Mammary epithelial cell (primary cell): ENCODE measurements at regions of chr3 and their contacts with region 1.

Region 1: GRCh38 chr3:48708481-48708889 is 8.5 kb downstream of the IP6K2 start:
- DNase-seq: peak; percentile 52
- H3K4me3 ChIP-seq: no peak overlapping the region
- H3K27ac ChIP-seq: peak overlapping the region; percentile 92
- H3K4me1 ChIP-seq: peaks cover 39% of the 10 kb centered on the region
- H3K27me3 ChIP-seq: no peaks in the 10 kb centered on the region
- CTCF ChIP-seq: no peak

Region 2: DNA sequence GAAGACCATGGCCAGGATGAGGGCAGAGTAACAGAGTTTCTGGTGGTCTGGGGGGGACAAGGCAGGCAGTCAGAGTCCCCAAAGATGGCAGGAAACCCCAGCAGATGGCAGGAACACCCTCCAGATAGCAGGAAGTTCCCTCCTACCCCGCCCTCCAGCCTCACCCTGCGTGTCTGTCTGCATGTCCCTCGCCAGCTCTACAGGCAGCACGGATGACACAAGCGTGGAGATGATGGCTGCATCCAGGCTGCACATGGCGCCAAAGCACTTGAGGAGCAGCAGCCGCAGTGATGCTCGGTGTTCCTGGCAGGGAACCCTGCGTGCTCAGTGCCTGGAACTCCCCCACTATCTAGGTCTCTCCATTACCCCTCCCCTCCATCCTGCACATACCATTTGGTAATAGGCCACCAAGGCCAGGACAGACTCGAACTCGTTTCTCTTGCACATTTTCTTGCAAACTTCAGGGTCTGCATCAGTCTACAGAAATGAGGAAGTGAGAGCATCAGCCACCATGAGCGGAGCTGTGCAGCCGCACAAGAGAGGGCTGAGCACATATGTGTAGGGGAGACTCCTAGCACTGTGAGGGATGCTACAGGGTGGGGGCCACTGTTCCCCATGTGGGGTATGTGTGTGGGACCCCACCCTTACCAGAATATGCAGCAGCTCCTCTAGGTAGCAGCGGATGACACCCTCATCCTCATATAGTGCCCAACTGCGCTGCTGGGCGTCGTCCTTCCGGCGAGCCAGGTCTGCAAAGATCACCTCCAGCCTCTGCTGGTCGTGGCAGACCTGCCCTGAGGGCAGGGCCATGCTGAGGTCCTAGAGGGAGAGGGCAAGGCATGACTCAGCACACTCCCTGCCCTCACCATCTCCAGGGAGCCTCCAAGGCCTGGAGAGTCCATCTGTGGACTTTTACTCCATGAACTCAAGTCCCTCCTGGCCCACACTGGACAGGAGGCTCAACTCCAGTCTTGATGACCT is 28.8 kb before region 1 on chr3:
- CTCF ChIA-PET with region 1: no interaction called
- dilution Hi-C with region 1: no loop called
- in situ Hi-C with region 1: no loop called
- intact Hi-C with region 1: no loop called
- DNase-seq: no peak
- H3K4me3 ChIP-seq: no peak overlapping the region
- H3K27ac ChIP-seq: no peak overlapping the region
- H3K4me1 ChIP-seq: peaks cover 19% of the 10 kb centered on the region
- H3K27me3 ChIP-seq: no peaks in the 10 kb centered on the region
- CTCF ChIP-seq: no peak

Region 3: DNA sequence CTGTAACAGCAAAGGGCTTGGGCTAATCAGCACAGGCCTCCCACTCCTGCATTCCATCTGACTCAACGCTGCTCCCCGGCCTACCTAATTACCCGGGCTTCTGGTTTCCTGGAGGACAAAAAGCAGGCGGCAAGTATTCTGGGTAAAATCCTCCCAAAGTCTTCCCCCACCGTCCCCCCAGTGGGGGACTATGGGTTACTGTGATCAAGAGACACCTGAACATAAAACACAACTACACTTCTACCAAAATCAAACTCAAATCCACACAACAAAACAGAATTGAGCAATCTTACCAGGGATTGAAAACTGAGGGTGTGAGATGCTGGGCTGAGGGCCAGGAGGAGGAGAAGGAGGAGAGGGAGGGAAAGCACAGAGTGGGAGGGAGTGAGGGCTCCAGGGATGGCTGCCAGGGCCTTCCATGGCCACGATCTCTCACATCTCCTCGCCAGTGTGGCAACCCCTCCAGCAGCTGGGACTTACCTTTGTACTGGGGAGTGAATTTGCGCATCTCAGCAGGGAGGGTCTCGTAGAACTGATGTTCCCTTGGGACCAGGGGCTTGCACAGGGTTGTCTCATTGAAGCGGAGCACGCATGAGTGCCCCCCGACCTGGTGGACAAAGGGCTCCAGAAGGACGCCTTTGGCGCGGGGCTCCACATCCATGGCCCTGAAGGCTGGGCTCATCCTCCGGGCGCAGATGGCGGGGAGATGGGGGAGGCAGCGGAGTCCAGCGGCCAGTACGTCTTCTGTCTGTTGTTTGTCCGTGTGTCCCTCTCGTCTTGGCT is 13.7 kb before region 1 on chr3:
- CTCF ChIA-PET with region 1: interaction called, 4 read pairs
- dilution Hi-C with region 1: no loop called
- in situ Hi-C with region 1: no loop called
- intact Hi-C with region 1: loop called (anchors 2 kb)
- DNase-seq: peak; percentile 85
- H3K4me3 ChIP-seq: peak overlapping the region in 2 of 3 experiments; percentile 30 to 37
- H3K27ac ChIP-seq: peak overlapping the region; percentile 81
- H3K4me1 ChIP-seq: peaks cover 43% of the 10 kb centered on the region
- H3K27me3 ChIP-seq: no peaks in the 10 kb centered on the region
- CTCF ChIP-seq: no peak